PC-9 (cell line): ENCODE measurements at regions of chr12 and their contacts with region 1.

Region 1: GRCh38 chr12:30746190-30746589 is 8.6 kb downstream of the CAPRIN2 start:
- DNase-seq: no peak
- H3K4me3 ChIP-seq: no peak overlapping the region
- H3K27ac ChIP-seq: no peak overlapping the region
- H3K4me1 ChIP-seq: peaks cover 21% of the 10 kb centered on the region; the same call in 1 of the 2 replicates
- H3K27me3 ChIP-seq: no peaks in the 10 kb centered on the region
- CTCF ChIP-seq: no peak

Region 2: GRCh38 chr12:29309320-29309902 is 1436.8 kb before region 1 on chr12:
- CTCF ChIA-PET with region 1: no interaction called
- POLR2A ChIA-PET with region 1: no interaction called
- intact Hi-C with region 1: no loop called
- DNase-seq: no peak
- H3K4me3 ChIP-seq: no peak overlapping the region
- H3K27ac ChIP-seq: no peak overlapping the region
- H3K4me1 ChIP-seq: no peaks in the 10 kb centered on the region
- H3K27me3 ChIP-seq: no peaks in the 10 kb centered on the region
- CTCF ChIP-seq: peak; percentile 67

Region 3: GRCh38 chr12:30725739-30726138 is 20.5 kb before region 1 on chr12:
- CTCF ChIA-PET with region 1: no interaction called
- POLR2A ChIA-PET with region 1: interaction called, 6 read pairs
- intact Hi-C with region 1: loop called (anchors 2 kb)
- DNase-seq: peak in 1 of 2 experiments; percentile 81
- H3K4me3 ChIP-seq: no peak overlapping the region
- H3K27ac ChIP-seq: peak overlapping the region; percentile 62
- H3K4me1 ChIP-seq: peaks cover 24% of the 10 kb centered on the region
- H3K27me3 ChIP-seq: no peaks in the 10 kb centered on the region
- CTCF ChIP-seq: no peak

Region 4: DNA sequence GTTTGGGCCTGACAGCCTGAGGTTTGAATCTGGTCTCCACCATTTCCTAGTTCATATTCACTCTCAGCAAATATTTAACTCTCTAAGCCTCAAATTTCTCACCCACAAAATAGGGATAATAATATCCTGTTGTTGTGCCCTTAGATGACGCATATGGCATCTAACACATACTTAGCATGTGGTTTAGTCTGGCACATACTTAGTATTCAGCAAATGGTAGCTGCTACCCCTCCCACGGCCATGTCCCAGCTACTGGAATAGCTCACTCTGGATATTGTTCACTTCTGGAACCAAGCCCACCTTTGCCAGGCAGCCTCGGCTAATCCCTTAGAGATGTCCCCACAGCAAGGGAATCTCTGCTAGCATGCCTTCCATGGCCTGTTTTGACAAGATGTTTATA is 1413.7 kb after region 1 on chr12:
- CTCF ChIA-PET with region 1: no interaction called
- POLR2A ChIA-PET with region 1: no interaction called
- intact Hi-C with region 1: no loop called
- DNase-seq: no peak
- H3K4me3 ChIP-seq: no peak overlapping the region
- H3K27ac ChIP-seq: no peak overlapping the region
- H3K4me1 ChIP-seq: no peaks in the 10 kb centered on the region
- H3K27me3 ChIP-seq: no peaks in the 10 kb centered on the region
- CTCF ChIP-seq: no peak